ENCODE measurements at regions of chr6 and their contacts with region 1.

Region 1: GRCh38 chr6:16338577-16339262 is 100.3 kb downstream of the GMPR start:
- DNase-seq: peak; percentile 75 to 87 (median 77)
- H3K4me3 ChIP-seq: no peak overlapping the region
- H3K27ac ChIP-seq: no peak overlapping the region
- H3K4me1 ChIP-seq: peaks cover 14% of the 10 kb centered on the region
- H3K27me3 ChIP-seq: no peaks in the 10 kb centered on the region
- CTCF ChIP-seq: peak in 1 of 3 donors; percentile 36
- EP300 ChIP-seq: no peak
- POLR2A ChIP-seq: no peak

Region 2: GRCh38 chr6:16403831-16404230 is 65.1 kb after region 1 on chr6:
- intact Hi-C with region 1: loop called in 2 of 4 experiments (anchors 5 to 10 kb)
- DNase-seq: no peak
- H3K4me3 ChIP-seq: no peak overlapping the region
- H3K27ac ChIP-seq: no peak overlapping the region
- H3K4me1 ChIP-seq: peaks cover 8% of the 10 kb centered on the region
- H3K27me3 ChIP-seq: no peaks in the 10 kb centered on the region
- CTCF ChIP-seq: peak in 1 of 3 donors; percentile 6
- EP300 ChIP-seq: no peak
- POLR2A ChIP-seq: no peak

Measured in ovary (tissue), 10 donors.